AG04449 (cell line): ENCODE measurements at regions of chr4 and their contacts with region 1.

Region 1: DNA sequence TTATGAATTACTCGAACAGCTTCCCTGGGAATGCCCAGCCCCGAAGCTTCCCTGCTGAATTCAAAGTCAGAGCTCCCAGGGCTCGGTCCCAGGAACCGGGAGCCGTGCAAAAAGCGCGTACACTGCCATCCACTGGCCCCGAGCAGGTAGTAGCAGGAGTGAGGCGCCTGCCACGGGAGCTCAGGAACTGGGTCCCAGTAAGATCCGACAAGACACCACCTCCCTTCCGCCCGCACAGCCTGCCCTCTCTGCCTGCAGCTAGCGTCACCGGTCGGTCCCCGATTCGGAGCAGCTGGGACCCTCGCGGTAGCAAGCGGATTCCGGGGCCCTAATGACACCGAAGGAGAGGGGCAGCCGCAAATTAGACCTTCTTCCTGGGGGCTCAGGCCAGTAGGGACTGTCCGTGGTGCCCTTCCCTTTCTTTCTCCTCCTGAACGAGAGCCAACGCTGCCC is 1.2 kb downstream of the CORIN start:
- DNase-seq: no peak
- H3K4me3 ChIP-seq: peak overlapping the region; percentile 71
- CTCF ChIP-seq: peak; percentile 91

Region 2: DNA sequence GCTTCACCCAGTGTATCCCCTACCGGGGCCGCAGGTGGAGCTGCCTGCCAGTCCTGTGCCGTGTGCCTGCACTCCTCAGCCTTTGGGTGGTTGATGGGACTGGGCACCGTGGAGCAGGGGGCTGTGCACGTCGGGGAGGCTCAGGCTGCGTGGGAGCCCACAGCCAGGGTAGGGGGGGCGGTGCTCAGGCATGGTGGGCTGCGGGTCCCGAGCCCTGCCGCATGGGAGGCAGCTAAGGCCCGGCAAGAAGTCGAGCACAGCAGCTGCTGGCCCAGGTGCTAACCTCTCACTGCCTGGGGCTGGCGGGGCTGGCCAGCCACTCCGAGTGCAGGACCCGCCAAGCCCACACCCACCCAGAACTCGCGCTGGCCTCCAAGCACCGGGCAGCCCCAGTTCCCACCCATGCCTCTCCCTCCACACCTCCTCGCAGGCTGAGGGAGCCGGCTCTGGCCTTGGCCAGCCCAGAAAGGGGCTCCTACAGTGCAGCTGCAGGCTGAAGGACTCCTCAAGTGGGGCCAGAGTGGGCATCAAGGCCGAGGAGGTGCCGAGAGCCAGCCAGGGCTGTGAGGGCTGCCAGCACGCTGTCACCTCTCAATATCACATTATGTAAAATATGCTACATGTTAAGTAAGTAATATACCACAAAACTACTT is 1031.8 kb before region 1 on chr4:
- CTCF ChIA-PET with region 1: no interaction called
- POLR2A ChIA-PET with region 1: no interaction called
- DNase-seq: no peak
- H3K4me3 ChIP-seq: no peak overlapping the region
- CTCF ChIP-seq: no peak

Region 3: DNA sequence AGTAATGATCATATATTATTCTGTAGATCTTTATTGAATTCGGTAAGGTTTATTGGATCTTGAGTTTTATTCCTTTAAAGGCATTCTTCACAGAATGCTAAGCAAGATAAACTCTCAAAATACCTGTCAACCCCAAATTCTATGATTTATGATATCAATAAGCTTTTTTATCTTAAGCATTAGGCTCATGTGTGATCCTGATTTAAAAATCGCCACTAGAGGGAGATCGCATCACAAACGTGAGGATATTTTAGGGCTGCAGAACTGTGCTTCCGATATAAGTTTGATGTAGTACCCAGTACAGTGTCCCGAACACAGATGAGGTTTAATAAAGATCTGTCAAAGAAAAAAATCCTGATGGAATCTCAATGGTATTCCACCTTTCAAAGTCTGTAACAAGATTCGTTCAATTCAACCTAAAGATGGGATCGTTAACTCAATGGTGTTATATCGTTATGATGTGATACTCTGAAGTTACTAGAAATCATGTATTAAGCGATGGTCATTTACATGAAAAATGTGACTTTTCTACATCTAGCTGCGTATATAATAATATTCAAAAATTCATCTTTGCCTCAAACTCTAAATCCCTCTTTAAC is 167.8 kb before region 1 on chr4:
- CTCF ChIA-PET with region 1: interaction called, 58 read pairs
- POLR2A ChIA-PET with region 1: no interaction called
- DNase-seq: no peak
- H3K4me3 ChIP-seq: no peak overlapping the region
- CTCF ChIP-seq: peak; percentile 60

Region 4: GRCh38 chr4:47686294-47686872 is 150.3 kb before region 1 on chr4:
- CTCF ChIA-PET with region 1: interaction called, 16 read pairs
- POLR2A ChIA-PET with region 1: no interaction called
- DNase-seq: no peak
- H3K4me3 ChIP-seq: no peak overlapping the region
- CTCF ChIP-seq: peak; percentile 64

Region 5: GRCh38 chr4:47824840-47825239 is 11.8 kb before region 1 on chr4:
- CTCF ChIA-PET with region 1: interaction called, 14 read pairs
- POLR2A ChIA-PET with region 1: no interaction called
- DNase-seq: no peak
- H3K4me3 ChIP-seq: no peak overlapping the region
- CTCF ChIP-seq: no peak

Region 6: DNA sequence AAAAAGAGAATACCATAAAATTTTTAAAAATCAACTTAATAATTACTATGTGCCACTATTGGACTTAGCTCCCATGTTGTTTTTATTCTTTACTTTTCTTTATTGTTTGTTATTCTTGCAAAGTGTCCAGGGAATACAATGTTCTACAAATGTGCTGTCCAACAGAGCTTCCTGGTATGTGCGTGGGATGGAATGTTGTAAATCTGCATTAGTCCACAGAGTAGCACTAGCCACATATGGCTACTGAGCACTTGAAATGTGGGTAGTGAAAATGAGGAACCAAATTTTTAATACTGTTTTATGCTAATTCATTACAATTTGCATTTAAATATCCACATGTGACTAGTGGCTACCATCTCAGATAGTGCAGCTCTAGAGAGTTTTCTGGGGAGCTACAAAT is 15.5 kb after region 1 on chr4:
- CTCF ChIA-PET with region 1: interaction called, 30 read pairs
- POLR2A ChIA-PET with region 1: no interaction called
- DNase-seq: peak; percentile 63
- H3K4me3 ChIP-seq: no peak overlapping the region
- CTCF ChIP-seq: no peak

Region 7: DNA sequence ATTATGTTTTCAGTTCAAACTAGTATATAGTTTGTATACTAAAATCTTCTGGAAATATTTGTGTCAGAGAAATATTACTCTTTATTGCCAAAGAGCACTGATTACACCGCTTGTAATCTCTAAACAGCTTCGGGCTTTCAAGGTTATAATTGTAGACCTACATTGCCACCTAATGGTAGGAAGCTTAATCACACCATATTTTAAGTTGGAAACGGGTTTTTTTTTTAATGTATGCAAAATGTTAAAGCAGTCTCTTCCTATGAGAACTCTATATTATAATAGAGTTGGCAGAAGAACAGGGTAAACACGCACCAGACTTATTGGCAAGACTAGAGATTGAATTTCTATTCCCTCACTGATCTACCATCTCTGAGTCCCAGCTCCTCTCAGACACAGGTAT is 97.2 kb after region 1 on chr4:
- CTCF ChIA-PET with region 1: interaction called, 25 read pairs
- POLR2A ChIA-PET with region 1: no interaction called
- DNase-seq: no peak
- H3K4me3 ChIP-seq: no peak overlapping the region
- CTCF ChIP-seq: peak; percentile 34